CD4-positive, alpha-beta T cell (primary cell): ENCODE measurements at regions of chr6 and their contacts with region 1.

Region 1: GRCh38 chr6:107786709-107787588 is 37.2 kb downstream of the SCML4 start:
- DNase-seq: peak in 13 of 14 experiments; percentile 30 to 75 (median 52)
- ATAC-seq: peak; percentile 79
- H3K4me3 ChIP-seq: peak overlapping the region; percentile 0
- H3K4me3 Mint-ChIP-seq: peak overlapping the region; percentile 87
- H3K27ac ChIP-seq: peak overlapping the region; percentile 19 to 66
- H3K27ac Mint-ChIP-seq: peak overlapping the region; percentile 93
- H3K4me1 ChIP-seq: peaks cover 81% of the 10 kb centered on the region
- H3K4me1 Mint-ChIP-seq: peaks cover 87% of the 10 kb centered on the region
- H3K27me3 ChIP-seq: no peaks in the 10 kb centered on the region
- H3K27me3 Mint-ChIP-seq: no peaks in the 10 kb centered on the region
- CTCF ChIP-seq: no peak

Region 2: GRCh38 chr6:107560657-107561056 is 226.3 kb before region 1 on chr6:
- CTCF ChIA-PET with region 1: no interaction called
- POLR2A ChIA-PET with region 1: no interaction called
- intact Hi-C with region 1: no loop called
- DNase-seq: no peak
- ATAC-seq: no peak
- H3K4me3 ChIP-seq: no peak overlapping the region
- H3K4me3 Mint-ChIP-seq: no peak overlapping the region
- H3K27ac ChIP-seq: no peak overlapping the region
- H3K27ac Mint-ChIP-seq: no peak overlapping the region
- H3K4me1 ChIP-seq: no peaks in the 10 kb centered on the region
- H3K4me1 Mint-ChIP-seq: no peaks in the 10 kb centered on the region
- H3K27me3 ChIP-seq: peaks cover 0 to 10% of the 10 kb centered on the region in 2 experiments
- H3K27me3 Mint-ChIP-seq: peaks cover 42% of the 10 kb centered on the region
- CTCF ChIP-seq: no peak

Region 3: DNA sequence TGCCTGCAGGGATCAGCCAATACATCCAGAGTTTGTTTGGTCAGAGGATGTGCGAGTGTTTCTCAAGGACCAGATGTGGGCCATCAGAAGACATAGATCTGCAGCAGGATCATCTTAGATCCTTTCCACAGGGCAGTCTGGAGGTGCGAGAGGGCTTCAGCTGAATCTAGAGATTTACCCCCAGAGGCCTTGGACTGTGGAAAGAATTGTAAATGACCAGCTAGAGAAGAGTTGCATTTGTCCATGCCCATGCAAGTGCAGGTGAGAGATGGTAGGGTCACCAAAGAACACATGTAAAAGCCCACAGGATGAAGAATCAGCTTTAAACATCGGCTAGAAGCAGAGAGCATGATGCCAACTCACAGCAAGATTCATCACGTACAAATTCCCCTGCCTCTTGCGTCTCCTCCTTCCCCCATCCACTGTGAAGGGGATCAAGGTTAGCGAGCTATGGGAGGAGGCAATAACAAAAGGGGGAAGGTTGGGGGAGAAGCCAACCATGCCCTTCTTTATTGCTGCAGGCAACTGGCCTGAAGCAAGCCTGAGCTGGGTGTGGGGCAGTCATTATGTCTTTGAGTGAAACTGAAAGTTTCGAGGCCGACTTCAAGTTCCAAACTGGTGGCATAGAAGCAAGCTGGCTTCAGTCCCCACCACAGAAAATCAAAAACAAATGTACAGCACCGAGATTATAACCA is 46.3 kb before region 1 on chr6:
- CTCF ChIA-PET with region 1: no interaction called
- POLR2A ChIA-PET with region 1: interaction called, 82 read pairs
- intact Hi-C with region 1: loop called in 1 of 2 experiments (anchors 2 kb)
- DNase-seq: peak in 4 of 14 experiments; percentile 49 to 56 (median 54)
- ATAC-seq: peak; percentile 14
- H3K4me3 ChIP-seq: peak overlapping the region; percentile 46
- H3K4me3 Mint-ChIP-seq: peak overlapping the region; percentile 76
- H3K27ac ChIP-seq: peak overlapping the region; percentile 69 to 86
- H3K27ac Mint-ChIP-seq: peak overlapping the region; percentile 93
- H3K4me1 ChIP-seq: peaks cover 59% of the 10 kb centered on the region
- H3K4me1 Mint-ChIP-seq: peaks cover 87% of the 10 kb centered on the region
- H3K27me3 ChIP-seq: no peaks in the 10 kb centered on the region
- H3K27me3 Mint-ChIP-seq: no peaks in the 10 kb centered on the region
- CTCF ChIP-seq: no peak

Region 4: DNA sequence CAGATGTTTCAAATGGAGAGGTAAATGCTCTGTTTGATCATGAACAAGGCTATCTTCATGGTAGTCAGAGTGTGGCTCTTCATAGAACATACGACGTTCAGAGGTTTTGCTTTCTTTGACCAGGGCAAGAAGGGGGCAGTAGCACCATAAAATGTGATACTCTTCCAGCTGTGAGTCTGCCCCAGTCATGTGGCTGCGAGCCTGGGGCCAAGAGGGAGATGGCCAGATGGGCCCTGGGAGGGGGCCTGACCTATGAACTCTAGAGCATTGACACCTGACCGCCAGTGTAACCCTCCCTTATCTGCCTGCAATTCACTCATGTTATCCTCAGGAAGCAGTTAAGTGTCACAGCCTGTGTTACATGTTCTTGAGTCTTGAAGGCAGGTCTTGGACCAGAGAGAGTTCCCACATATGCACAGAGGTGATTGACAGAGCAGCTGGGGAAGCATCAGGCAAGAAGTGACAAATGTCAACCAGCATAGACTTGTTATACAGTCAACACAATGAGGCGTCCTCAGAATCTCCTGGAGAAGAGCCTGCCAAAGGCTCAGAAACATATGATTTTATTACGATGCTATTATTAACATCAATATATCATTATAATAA is 17.8 kb before region 1 on chr6:
- CTCF ChIA-PET with region 1: no interaction called
- POLR2A ChIA-PET with region 1: interaction called, 12 read pairs
- intact Hi-C with region 1: loop called in 1 of 2 experiments (anchors 2 kb)
- DNase-seq: no peak
- ATAC-seq: no peak
- H3K4me3 ChIP-seq: no peak overlapping the region
- H3K4me3 Mint-ChIP-seq: no peak overlapping the region
- H3K27ac ChIP-seq: no peak overlapping the region
- H3K27ac Mint-ChIP-seq: no peak overlapping the region
- H3K4me1 ChIP-seq: peaks cover 2% of the 10 kb centered on the region
- H3K4me1 Mint-ChIP-seq: peaks cover 42% of the 10 kb centered on the region
- H3K27me3 ChIP-seq: no peaks in the 10 kb centered on the region
- H3K27me3 Mint-ChIP-seq: no peaks in the 10 kb centered on the region
- CTCF ChIP-seq: no peak

Region 5: DNA sequence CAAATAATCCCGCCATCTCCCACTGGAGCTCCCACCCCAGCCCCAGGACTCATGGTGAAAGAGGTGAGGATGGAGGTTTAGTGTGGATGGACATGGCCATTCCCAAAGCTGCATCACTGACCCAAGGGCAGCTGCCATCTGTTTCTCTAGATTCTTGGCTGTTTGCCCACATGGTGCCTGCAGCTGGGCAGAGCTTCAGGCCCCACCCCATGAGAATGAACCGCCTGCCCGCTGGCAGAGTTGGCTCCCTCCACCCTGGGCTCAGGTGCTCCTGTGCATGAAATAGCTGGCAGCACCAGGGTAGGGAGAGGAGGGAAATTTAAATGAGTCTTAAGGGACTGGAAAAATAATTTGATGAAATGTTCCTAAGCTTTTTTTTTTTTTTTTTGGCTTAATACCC is 19.7 kb after region 1 on chr6:
- CTCF ChIA-PET with region 1: no interaction called
- POLR2A ChIA-PET with region 1: interaction called, 11 read pairs
- intact Hi-C with region 1: no loop called
- DNase-seq: peak in 1 of 14 experiments; percentile 3
- ATAC-seq: no peak
- H3K4me3 ChIP-seq: no peak overlapping the region
- H3K4me3 Mint-ChIP-seq: no peak overlapping the region
- H3K27ac ChIP-seq: no peak overlapping the region
- H3K27ac Mint-ChIP-seq: peak overlapping the region; percentile 80
- H3K4me1 ChIP-seq: peaks cover 41% of the 10 kb centered on the region
- H3K4me1 Mint-ChIP-seq: peaks cover 85% of the 10 kb centered on the region
- H3K27me3 ChIP-seq: no peaks in the 10 kb centered on the region
- H3K27me3 Mint-ChIP-seq: no peaks in the 10 kb centered on the region
- CTCF ChIP-seq: no peak